ENCODE measurements at regions of chr9 and their contacts with region 1.

Region 1: GRCh38 chr9:105414947-105415661 is 32.7 kb upstream of the FSD1L start:
- DNase-seq: peak; percentile 30 to 75 (median 58)
- ATAC-seq: peak; percentile 86
- H3K4me3 ChIP-seq: no peak overlapping the region
- H3K4me3 Mint-ChIP-seq: no peak overlapping the region
- H3K27ac ChIP-seq: no peak overlapping the region
- H3K27ac Mint-ChIP-seq: no peak overlapping the region
- H3K4me1 ChIP-seq: no peaks in the 10 kb centered on the region
- H3K4me1 Mint-ChIP-seq: peaks cover 0 to 19% (median 0%) of the 10 kb centered on the region in 7 donors
- H3K27me3 ChIP-seq: no peaks in the 10 kb centered on the region
- H3K27me3 Mint-ChIP-seq: peaks cover 29 to 46% (median 38%) of the 10 kb centered on the region in 5 donors

Region 2: GRCh38 chr9:104514901-104515300 is 900.2 kb before region 1 on chr9:
- CTCF ChIA-PET with region 1: no interaction called
- POLR2A ChIA-PET with region 1: no interaction called
- intact Hi-C with region 1: no loop called
- DNase-seq: no peak
- ATAC-seq: no peak
- H3K4me3 ChIP-seq: no peak overlapping the region
- H3K4me3 Mint-ChIP-seq: no peak overlapping the region
- H3K27ac ChIP-seq: no peak overlapping the region
- H3K27ac Mint-ChIP-seq: no peak overlapping the region
- H3K4me1 ChIP-seq: no peaks in the 10 kb centered on the region
- H3K4me1 Mint-ChIP-seq: no peaks in the 10 kb centered on the region
- H3K27me3 ChIP-seq: no peaks in the 10 kb centered on the region
- H3K27me3 Mint-ChIP-seq: peaks cover 0 to 14% (median 0%) of the 10 kb centered on the region in 5 donors

Region 3: DNA sequence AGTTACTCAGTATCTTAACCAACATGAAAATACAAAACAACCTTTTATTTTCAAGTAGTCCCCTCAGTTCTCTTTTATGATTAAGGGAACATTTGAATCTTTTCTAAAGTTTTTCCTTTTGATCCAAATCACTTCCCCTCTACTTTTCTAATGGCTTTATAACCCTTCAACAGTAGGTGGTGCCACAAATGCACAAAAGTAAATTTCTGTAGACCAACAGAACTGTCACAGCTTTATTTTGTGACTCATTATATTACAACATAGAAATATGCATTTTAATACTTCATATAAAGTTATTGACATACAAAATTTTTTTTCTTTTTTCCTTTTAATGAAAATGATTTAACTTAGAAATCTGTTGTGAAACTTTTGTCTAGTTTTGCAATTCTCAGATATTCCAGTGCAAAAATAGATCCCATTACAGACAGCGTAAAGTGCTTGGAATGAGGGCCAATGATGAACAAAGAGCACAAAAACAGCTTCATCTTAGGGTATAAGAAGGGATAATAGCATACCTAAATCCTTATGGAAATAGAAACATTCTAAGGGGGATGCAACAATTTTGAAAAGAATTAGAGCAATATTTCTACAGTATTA is 634.2 kb before region 1 on chr9:
- CTCF ChIA-PET with region 1: no interaction called
- POLR2A ChIA-PET with region 1: no interaction called
- intact Hi-C with region 1: loop called (anchors 1 to 2 kb)
- DNase-seq: peak in 1 of 9 donors; percentile 5
- ATAC-seq: peak; percentile 74
- H3K4me3 ChIP-seq: no peak overlapping the region
- H3K4me3 Mint-ChIP-seq: no peak overlapping the region
- H3K27ac ChIP-seq: no peak overlapping the region
- H3K27ac Mint-ChIP-seq: no peak overlapping the region
- H3K4me1 ChIP-seq: no peaks in the 10 kb centered on the region
- H3K4me1 Mint-ChIP-seq: peaks cover 0 to 6% (median 0%) of the 10 kb centered on the region in 7 donors
- H3K27me3 ChIP-seq: no peaks in the 10 kb centered on the region
- H3K27me3 Mint-ChIP-seq: peaks cover 0 to 3% (median 0%) of the 10 kb centered on the region in 5 donors

Region 4: GRCh38 chr9:104808035-104808614 is 607.0 kb before region 1 on chr9:
- CTCF ChIA-PET with region 1: no interaction called
- POLR2A ChIA-PET with region 1: no interaction called
- intact Hi-C with region 1: loop called in 1 of 2 experiments (anchors 1 kb)
- DNase-seq: no peak
- ATAC-seq: no peak
- H3K4me3 ChIP-seq: no peak overlapping the region
- H3K4me3 Mint-ChIP-seq: no peak overlapping the region
- H3K27ac ChIP-seq: no peak overlapping the region
- H3K27ac Mint-ChIP-seq: peak overlapping the region in 2 of 9 donors; percentile 1 to 11
- H3K4me1 ChIP-seq: no peaks in the 10 kb centered on the region
- H3K4me1 Mint-ChIP-seq: no peaks in the 10 kb centered on the region
- H3K27me3 ChIP-seq: no peaks in the 10 kb centered on the region
- H3K27me3 Mint-ChIP-seq: no peaks in the 10 kb centered on the region

Region 5: DNA sequence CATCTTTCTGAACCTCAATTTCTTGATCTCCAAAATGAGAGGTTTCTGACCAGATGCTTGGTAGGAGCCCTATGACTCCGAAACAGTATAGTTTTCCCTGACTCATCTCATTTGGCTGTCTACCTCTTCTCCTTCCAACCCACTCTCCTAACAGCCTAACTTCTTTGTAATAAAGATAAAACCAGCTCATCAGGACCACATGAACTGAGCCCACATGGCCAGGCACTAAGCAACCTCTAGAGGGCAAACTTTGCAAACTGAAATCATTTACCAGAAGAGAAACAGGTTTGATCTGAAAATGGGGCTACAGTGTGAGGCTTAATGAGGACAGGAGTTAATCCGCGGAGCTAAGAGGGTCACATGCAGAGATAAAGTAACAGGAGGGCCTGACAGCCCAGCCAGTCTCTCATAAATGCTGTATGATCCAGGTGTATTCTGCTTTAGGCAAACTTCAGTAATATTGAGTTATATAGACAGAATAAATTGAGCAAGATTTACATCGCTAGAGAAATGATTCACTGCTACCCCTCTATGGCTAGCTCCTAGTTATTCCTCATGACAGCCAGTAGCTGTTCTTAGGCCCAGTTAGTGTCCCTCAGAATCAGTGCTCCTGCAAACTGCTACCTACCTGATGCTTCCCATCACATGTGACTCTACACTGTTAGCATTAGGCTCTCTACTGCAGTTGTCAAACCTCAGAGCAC is 551.8 kb before region 1 on chr9:
- CTCF ChIA-PET with region 1: interaction called, 28 read pairs
- POLR2A ChIA-PET with region 1: no interaction called
- intact Hi-C with region 1: loop called (anchors 1 kb)
- DNase-seq: peak in 8 of 9 donors; percentile 25 to 69 (median 57)
- ATAC-seq: peak; percentile 80
- H3K4me3 ChIP-seq: no peak overlapping the region
- H3K4me3 Mint-ChIP-seq: no peak overlapping the region
- H3K27ac ChIP-seq: no peak overlapping the region
- H3K27ac Mint-ChIP-seq: peak overlapping the region in 2 of 9 donors; percentile 2 to 62
- H3K4me1 ChIP-seq: no peaks in the 10 kb centered on the region
- H3K4me1 Mint-ChIP-seq: peaks cover 0 to 18% (median 7%) of the 10 kb centered on the region in 7 donors
- H3K27me3 ChIP-seq: no peaks in the 10 kb centered on the region
- H3K27me3 Mint-ChIP-seq: no peaks in the 10 kb centered on the region

Region 6: GRCh38 chr9:104968025-104968982 is 446.8 kb before region 1 on chr9:
- CTCF ChIA-PET with region 1: no interaction called
- POLR2A ChIA-PET with region 1: no interaction called
- intact Hi-C with region 1: loop called in 1 of 2 experiments (anchors 5 kb)
- DNase-seq: peak; percentile 80 to 95 (median 91)
- ATAC-seq: peak; percentile 99
- H3K4me3 ChIP-seq: peak overlapping the region; percentile 85
- H3K4me3 Mint-ChIP-seq: peak overlapping the region; percentile 82 to 96 (median 94)
- H3K27ac ChIP-seq: peak overlapping the region; percentile 69
- H3K27ac Mint-ChIP-seq: peak overlapping the region; percentile 64 to 92 (median 86)
- H3K4me1 ChIP-seq: peaks cover 0 to 6% of the 10 kb centered on the region in 2 donors
- H3K4me1 Mint-ChIP-seq: peaks cover 12 to 25% (median 17%) of the 10 kb centered on the region in 7 donors
- H3K27me3 ChIP-seq: peaks cover 0 to 4% of the 10 kb centered on the region in 2 donors
- H3K27me3 Mint-ChIP-seq: peaks cover 0 to 30% (median 0%) of the 10 kb centered on the region in 5 donors

Region 7: GRCh38 chr9:105157130-105157583 is 257.9 kb before region 1 on chr9:
- CTCF ChIA-PET with region 1: interaction called, 4 read pairs
- POLR2A ChIA-PET with region 1: no interaction called
- intact Hi-C with region 1: loop called (anchors 1 kb)
- DNase-seq: peak in 7 of 9 donors; percentile 18 to 53 (median 45)
- ATAC-seq: peak; percentile 89
- H3K4me3 ChIP-seq: no peak overlapping the region
- H3K4me3 Mint-ChIP-seq: no peak overlapping the region
- H3K27ac ChIP-seq: no peak overlapping the region
- H3K27ac Mint-ChIP-seq: peak overlapping the region in 1 of 9 donors; percentile 60
- H3K4me1 ChIP-seq: peaks cover 0 to 7% of the 10 kb centered on the region in 2 donors
- H3K4me1 Mint-ChIP-seq: peaks cover 12 to 34% (median 22%) of the 10 kb centered on the region in 7 donors
- H3K27me3 ChIP-seq: no peaks in the 10 kb centered on the region
- H3K27me3 Mint-ChIP-seq: peaks cover 0 to 6% (median 0%) of the 10 kb centered on the region in 5 donors

Measured in naive thymus-derived CD4-positive, alpha-beta T cell (primary cell).